ENCODE measurements at regions of chrX and their contacts with region 1.

Region 1: GRCh38 chrX:49043220-49043986 is at the start of gene TFE3:
- DNase-seq: peak; percentile 90
- H3K4me3 ChIP-seq: peak within 1 kb of the TSS; percentile 58
- H3K27ac ChIP-seq: peak within 1 kb of the TSS; percentile 75
- H3K4me1 ChIP-seq: peaks cover 13% of the 10 kb centered on the region
- H3K27me3 ChIP-seq: no peaks in the 10 kb centered on the region
- CTCF ChIP-seq: peak; percentile 44; the same call in 1 of the 2 replicates
- total RNA-seq, gene TFE3: 27.2 and 33.7 TPM in 2 replicates

Region 2: DNA sequence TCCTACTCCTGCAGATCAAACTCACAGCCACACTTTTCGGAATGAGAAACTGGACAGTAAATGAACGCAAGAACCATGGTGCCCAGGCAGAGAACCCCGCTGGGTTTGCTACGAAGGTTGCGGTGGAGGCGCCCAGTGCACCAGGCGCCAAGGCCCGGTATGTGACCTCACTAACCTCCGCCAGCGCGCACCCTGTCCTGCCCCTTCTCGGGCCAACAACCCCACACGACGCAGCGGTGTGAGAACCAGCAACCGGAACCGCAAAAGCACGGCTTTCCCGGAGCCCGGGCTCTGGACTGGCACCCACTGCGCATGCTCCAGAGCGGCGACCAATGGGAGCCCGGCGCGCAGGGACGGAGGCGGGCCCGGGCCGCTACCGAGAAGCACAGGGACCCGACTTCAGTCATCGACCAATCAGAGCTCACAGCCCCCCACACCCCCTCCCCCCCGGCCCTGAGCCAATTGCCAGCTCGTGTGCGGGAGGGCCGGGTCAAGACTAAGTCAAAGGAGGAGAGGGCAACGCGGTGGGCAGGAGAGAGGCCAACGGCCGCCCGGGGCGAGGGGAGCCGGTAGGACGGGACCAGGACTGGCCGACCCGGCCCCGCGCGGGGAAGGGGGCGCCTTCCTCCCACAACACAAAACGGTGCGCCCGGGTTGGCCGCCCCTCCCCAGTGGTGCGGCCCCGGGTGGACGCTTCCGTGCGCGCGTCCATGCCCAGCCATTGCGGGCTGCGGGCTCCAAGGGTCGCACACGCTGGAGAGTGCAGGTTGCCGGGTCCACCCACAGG is 367.1 kb before region 1 on chrX:
- CTCF ChIA-PET with region 1: interaction called, 13 read pairs
- POLR2A ChIA-PET with region 1: no interaction called
- intact Hi-C with region 1: no loop called
- DNase-seq: peak; percentile 75 to 80
- H3K4me3 ChIP-seq: peak overlapping the region; percentile 60
- H3K27ac ChIP-seq: peak overlapping the region; percentile 47
- H3K4me1 ChIP-seq: no peaks in the 10 kb centered on the region
- H3K27me3 ChIP-seq: no peaks in the 10 kb centered on the region
- CTCF ChIP-seq: no peak

Region 3: GRCh38 chrX:48957827-48958634 is 85.4 kb before region 1 on chrX:
- CTCF ChIA-PET with region 1: interaction called, 3 read pairs
- POLR2A ChIA-PET with region 1: interaction called, 3 read pairs
- intact Hi-C with region 1: loop called (anchors 5 kb)
- DNase-seq: peak; percentile 83 to 87
- H3K4me3 ChIP-seq: peak overlapping the region; percentile 55; the same call in 1 of the 2 replicates
- H3K27ac ChIP-seq: peak overlapping the region; percentile 77
- H3K4me1 ChIP-seq: no peaks in the 10 kb centered on the region; the same call in 1 of the 2 replicates
- H3K27me3 ChIP-seq: no peaks in the 10 kb centered on the region
- CTCF ChIP-seq: no peak

Region 4: DNA sequence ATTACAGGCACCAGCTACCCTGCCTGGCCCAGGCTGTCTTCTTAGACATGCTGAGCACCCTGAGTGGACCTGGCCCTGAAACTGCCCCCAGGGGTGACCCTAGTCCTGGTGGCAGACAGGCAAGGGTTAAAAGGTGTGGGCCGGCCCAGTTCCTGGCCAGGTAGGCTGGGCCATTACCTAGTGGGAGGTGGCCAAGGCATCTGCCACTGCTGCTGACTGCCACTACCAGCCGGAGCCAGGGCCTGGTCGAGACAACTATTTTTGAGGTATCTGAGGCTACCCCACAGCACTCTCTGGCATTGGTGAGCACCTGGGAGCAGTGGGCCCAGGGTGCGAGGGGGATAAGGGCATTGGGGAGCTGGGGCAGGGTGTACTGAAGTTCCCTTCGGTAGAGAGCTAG is 15.4 kb after region 1 on chrX and contains the start of gene CCDC120:
- CTCF ChIA-PET with region 1: no interaction called
- POLR2A ChIA-PET with region 1: no interaction called
- intact Hi-C with region 1: loop called (anchors 2 kb)
- DNase-seq: no peak
- H3K4me3 ChIP-seq: peak within 1 kb of the TSS; percentile 57; the same call in 1 of the 2 replicates
- H3K27ac ChIP-seq: peak within 1 kb of the TSS; percentile 47; the same call in 1 of the 2 replicates
- H3K4me1 ChIP-seq: no peaks in the 10 kb centered on the region
- H3K27me3 ChIP-seq: no peaks in the 10 kb centered on the region
- CTCF ChIP-seq: no peak
- total RNA-seq, gene CCDC120: 20.6 and 23.9 TPM in 2 replicates

Region 5: GRCh38 chrX:49155900-49156837 is 112.8 kb after region 1 on chrX:
- CTCF ChIA-PET with region 1: no interaction called
- POLR2A ChIA-PET with region 1: no interaction called
- intact Hi-C with region 1: loop called (anchors 1 kb)
- DNase-seq: peak; percentile 68 to 76
- H3K4me3 ChIP-seq: peak overlapping the region; percentile 56; the same call in 1 of the 2 replicates
- H3K27ac ChIP-seq: peak overlapping the region; percentile 84
- H3K4me1 ChIP-seq: no peaks in the 10 kb centered on the region
- H3K27me3 ChIP-seq: no peaks in the 10 kb centered on the region
- CTCF ChIP-seq: peak; percentile 60

Region 6: GRCh38 chrX:49242545-49243066 is 199.2 kb after region 1 on chrX:
- CTCF ChIA-PET with region 1: no interaction called
- POLR2A ChIA-PET with region 1: no interaction called
- intact Hi-C with region 1: no loop called
- DNase-seq: no peak
- H3K4me3 ChIP-seq: no peak overlapping the region
- H3K27ac ChIP-seq: no peak overlapping the region
- H3K4me1 ChIP-seq: no peaks in the 10 kb centered on the region
- H3K27me3 ChIP-seq: no peaks in the 10 kb centered on the region
- CTCF ChIP-seq: no peak